Psoas muscle (tissue), 8 donors: ENCODE measurements at regions of chr3 and their contacts with region 1.

Region 1: DNA sequence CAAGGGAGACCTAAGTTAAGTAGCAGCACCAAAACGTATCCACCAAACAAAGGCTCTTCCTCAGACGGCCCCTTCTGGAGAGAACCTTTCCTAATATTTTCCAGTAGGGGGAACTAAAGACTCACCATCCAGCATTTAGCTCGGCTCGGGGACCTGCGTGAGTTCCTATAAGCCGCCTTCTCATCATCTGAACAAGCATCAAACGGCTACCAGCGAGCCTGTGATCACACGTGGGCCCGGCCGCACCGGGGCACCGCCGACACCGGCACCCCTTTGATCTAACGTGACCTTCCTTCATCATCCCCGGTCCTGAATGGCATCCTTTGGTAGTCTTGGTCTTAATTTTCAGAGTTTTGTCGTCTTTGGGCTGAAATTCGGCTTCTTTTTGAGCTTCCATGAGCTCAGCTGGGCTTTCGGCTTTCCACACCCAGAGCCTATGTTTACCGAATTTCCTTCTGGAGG is 1.4 kb upstream of the ROBO2 start:
- DNase-seq: peak; percentile 31 to 62
- ATAC-seq: peak; percentile 37 to 96 (median 84)
- H3K4me3 ChIP-seq: peak overlapping the region; percentile 56
- H3K27ac ChIP-seq: no peak overlapping the region
- H3K4me1 ChIP-seq: no peaks in the 10 kb centered on the region
- H3K27me3 ChIP-seq: peaks cover 0 to 46% (median 7%) of the 10 kb centered on the region in 3 donors
- CTCF ChIP-seq: peak; percentile 39

Region 2: GRCh38 chr3:77254967-77255831 is 216.7 kb after region 1 on chr3:
- intact Hi-C with region 1: loop called (anchors 2 to 5 kb)
- DNase-seq: no peak
- ATAC-seq: peak in 2 of 4 donors; percentile 65 to 74
- H3K4me3 ChIP-seq: no peak overlapping the region
- H3K27ac ChIP-seq: no peak overlapping the region
- H3K4me1 ChIP-seq: no peaks in the 10 kb centered on the region
- H3K27me3 ChIP-seq: no peaks in the 10 kb centered on the region
- CTCF ChIP-seq: peak; percentile 52

Region 3: GRCh38 chr3:77320514-77320913 is 282.0 kb after region 1 on chr3:
- intact Hi-C with region 1: loop called in 1 of 2 experiments (anchors 10 kb)
- DNase-seq: no peak
- ATAC-seq: no peak
- H3K4me3 ChIP-seq: no peak overlapping the region
- H3K27ac ChIP-seq: no peak overlapping the region
- H3K4me1 ChIP-seq: no peaks in the 10 kb centered on the region
- H3K27me3 ChIP-seq: no peaks in the 10 kb centered on the region
- CTCF ChIP-seq: peak; percentile 65

Region 4: GRCh38 chr3:78645628-78646310 is 1607.3 kb after region 1 on chr3:
- intact Hi-C with region 1: loop called in 1 of 2 experiments (anchors 10 kb)
- DNase-seq: no peak
- ATAC-seq: peak in 3 of 4 donors; percentile 27 to 84 (median 62)
- H3K4me3 ChIP-seq: no peak overlapping the region
- H3K27ac ChIP-seq: no peak overlapping the region
- H3K4me1 ChIP-seq: no peaks in the 10 kb centered on the region
- H3K27me3 ChIP-seq: no peaks in the 10 kb centered on the region
- CTCF ChIP-seq: peak; percentile 89